Activated T-helper 1 cell treated with anti-CD3 and anti-CD28 coated beads, Interleukin-12 subunit alpha, Interleukin-12 subunit beta, Interleukin-2, Interleukin-4 antibody, amounts not matched to agents 30 ng/mL and 10 ng/mL and 1 ng/mL, durations not matched to agents 14 hours and 24 hours and 36 hours (primary cell): ENCODE measurements at regions of chr10 and their contacts with region 1.

Region 1: GRCh38 chr10:43846187-43846680 is 197.6 kb upstream of the ZNF32 start:
- DNase-seq: no peak
- H3K4me3 Mint-ChIP-seq: peak overlapping the region; percentile 37
- H3K27ac Mint-ChIP-seq: no peak overlapping the region
- H3K4me1 Mint-ChIP-seq: peaks cover 8% of the 10 kb centered on the region
- H3K27me3 Mint-ChIP-seq: peaks cover 8% of the 10 kb centered on the region

Region 2: DNA sequence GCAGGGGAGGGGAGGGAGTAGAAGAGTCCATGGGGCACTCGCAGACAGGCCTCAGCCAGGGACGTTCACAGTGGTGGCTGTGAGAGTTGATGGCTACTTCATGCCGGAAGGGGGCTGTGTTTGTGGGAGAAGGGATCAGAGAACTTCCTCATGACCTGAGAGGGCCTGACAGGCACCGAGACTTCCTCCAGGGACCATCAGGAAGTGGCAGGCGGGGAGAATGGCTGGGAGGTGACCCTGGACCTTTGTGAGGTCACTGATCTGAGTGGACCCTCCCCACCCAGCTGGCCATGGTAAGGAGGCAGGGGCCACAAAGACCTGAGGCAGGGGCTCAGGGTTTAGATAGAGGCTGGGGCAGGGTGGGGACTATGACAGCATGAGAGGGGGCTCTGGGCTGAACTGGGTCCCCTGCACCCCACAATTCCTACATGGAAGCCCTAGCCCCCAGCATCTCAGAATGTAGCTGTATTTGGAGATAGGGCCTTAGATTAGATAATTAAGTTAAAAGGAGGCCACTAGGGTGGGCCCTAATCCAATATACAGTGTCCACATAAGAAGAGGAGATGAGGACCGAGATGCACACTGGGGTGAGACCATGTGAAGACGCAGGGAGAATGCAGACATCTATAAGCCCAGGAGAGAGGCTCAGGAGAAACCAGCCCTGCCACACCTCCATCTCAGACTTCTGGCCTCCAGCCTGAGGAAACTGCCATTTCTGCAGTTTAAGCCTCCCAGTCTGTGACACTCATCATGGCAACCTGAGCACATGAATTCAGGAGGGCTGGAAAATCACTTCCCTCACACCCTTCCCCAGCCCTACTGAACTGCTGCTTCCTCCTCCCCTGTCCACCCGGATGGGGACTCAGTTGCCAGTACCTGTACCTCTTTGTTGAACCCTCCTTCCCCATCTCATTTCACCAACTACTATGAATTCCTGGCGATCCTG is 76.4 kb after region 1 on chr10:
- intact Hi-C with region 1: loop called (anchors 2 kb)
- DNase-seq: no peak
- H3K4me3 Mint-ChIP-seq: no peak overlapping the region
- H3K27ac Mint-ChIP-seq: no peak overlapping the region
- H3K4me1 Mint-ChIP-seq: no peaks in the 10 kb centered on the region
- H3K27me3 Mint-ChIP-seq: peaks cover 1% of the 10 kb centered on the region

Region 3: GRCh38 chr10:44864637-44865288 is 1018.5 kb after region 1 on chr10:
- intact Hi-C with region 1: no loop called
- DNase-seq: peak; percentile 72
- H3K4me3 Mint-ChIP-seq: peak overlapping the region; percentile 89
- H3K27ac Mint-ChIP-seq: peak overlapping the region; percentile 54
- H3K4me1 Mint-ChIP-seq: peaks cover 17% of the 10 kb centered on the region
- H3K27me3 Mint-ChIP-seq: peaks cover 51% of the 10 kb centered on the region